Activated CD8-positive, alpha-beta memory T cell treated with anti-CD3 and anti-CD28 coated beads, Interleukin-2, amount 10 ng/mL, durations not matched to agents 7 days and 5 days (primary cell): ENCODE measurements at regions of chr11 and their contacts with region 1.

Region 1: DNA sequence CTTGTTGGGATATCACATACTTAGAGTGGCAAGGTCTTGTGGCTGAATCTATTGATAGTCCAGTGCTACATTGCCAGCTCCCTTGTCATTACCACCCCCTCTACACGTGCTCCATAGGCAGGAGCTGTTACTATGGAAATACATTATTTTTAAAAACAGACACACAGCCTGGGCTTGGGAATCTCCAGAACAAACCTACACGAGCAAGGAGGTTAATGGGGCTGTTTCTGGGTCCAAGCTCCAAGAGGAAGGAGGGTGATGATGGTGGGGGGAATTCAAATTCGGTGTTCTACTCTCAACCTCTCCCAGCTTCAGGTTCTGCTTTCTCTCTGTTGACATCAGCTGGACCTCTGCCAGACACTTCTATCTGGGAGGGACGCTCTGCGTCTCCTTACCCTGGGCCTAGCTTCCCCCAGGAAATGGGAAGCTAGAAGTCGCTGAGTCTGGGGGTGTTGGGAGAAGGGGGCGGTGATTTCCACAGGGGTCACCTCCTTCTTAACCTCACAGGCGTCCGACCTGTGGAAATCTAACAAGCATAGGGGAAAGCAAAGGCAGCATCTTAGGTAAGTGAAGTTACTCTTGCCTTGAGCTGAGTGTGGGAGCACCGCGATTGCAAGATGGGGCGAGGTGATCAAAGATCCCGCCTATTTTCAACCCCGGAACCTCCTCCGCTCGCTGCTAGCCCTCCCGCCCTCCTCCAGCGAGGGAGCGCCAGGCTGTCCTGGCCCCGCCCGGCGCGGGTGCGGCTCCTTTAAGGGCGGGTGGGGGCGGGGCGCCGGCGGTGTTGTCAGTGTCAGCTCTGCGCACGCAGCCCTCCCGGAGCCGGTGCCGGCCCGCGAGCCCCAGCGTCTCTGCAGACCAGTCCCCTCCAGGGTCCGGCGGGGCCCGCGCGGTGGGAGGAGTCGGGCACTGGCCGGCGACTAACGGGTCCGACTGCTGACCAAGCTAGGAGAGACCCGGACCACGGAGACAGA is at the start of gene C2CD2L:
- DNase-seq: peak; percentile 95
- ATAC-seq: peak; percentile 89
- H3K4me3 Mint-ChIP-seq: peak within 1 kb of the TSS; percentile 80
- H3K27ac Mint-ChIP-seq: peak within 1 kb of the TSS; percentile 93
- H3K4me1 Mint-ChIP-seq: peaks cover 45% of the 10 kb centered on the region
- H3K27me3 Mint-ChIP-seq: no peaks in the 10 kb centered on the region
- total RNA-seq, gene C2CD2L: 30.6 to 35.1 TPM

Region 2: GRCh38 chr11:119095066-119095880 is 11.6 kb before region 1 on chr11:
- CTCF ChIA-PET with region 1: interaction called, 15 read pairs
- DNase-seq: peak; percentile 100
- ATAC-seq: peak; percentile 79
- H3K4me3 Mint-ChIP-seq: peak overlapping the region; percentile 93
- H3K27ac Mint-ChIP-seq: peak overlapping the region; percentile 94
- H3K4me1 Mint-ChIP-seq: peaks cover 52% of the 10 kb centered on the region
- H3K27me3 Mint-ChIP-seq: peaks cover 2% of the 10 kb centered on the region

Region 3: DNA sequence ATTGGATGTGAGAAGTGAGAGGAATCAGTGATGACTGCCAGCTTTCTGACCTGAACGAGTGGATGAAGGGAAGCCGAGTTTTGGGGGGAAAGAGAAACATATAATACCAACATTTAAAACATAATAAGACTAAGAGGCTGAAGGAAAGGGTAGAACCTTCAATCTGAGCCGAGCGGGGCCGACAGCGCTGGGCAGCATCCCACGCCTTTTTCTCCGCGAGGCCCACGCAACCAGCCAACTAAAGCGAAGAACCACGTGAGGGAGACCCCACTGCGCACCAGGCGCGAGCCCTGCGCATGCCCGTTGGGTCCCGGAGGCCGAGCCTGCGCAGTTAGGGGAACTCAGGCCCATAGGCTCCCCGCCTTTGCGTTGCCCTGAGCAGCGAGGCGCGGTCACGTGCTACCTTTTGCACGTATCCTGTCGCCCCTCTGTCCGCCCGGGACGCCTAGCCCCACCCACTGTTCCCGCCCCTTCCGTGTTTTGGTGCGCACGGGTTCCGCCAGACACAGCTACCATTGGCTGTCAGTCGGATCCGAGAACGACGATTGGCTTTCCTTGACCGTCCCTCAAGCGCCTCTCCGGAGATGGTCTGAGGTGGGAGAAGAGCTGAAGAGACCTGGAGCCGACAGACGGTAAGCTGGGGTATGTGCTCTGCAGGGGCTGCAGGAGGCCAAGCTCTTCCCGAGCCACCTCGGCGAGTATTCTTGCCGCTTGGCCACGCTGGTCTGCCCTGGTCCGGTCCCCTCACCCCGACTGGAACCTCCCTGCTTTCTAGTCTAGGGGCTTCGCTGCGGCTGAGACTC is 14.4 kb after region 1 on chr11 and contains the start of gene HINFP:
- CTCF ChIA-PET with region 1: interaction called, 10 read pairs
- DNase-seq: peak; percentile 100
- ATAC-seq: peak; percentile 95
- H3K4me3 Mint-ChIP-seq: peak within 1 kb of the TSS; percentile 99
- H3K27ac Mint-ChIP-seq: peak within 1 kb of the TSS; percentile 87
- H3K4me1 Mint-ChIP-seq: peaks cover 28% of the 10 kb centered on the region
- H3K27me3 Mint-ChIP-seq: no peaks in the 10 kb centered on the region
- total RNA-seq, gene HINFP: 40.4 to 43.0 TPM